ENCODE measurements at regions of chr12 and their contacts with region 1.

Region 1: GRCh38 chr12:12334367-12335040 is 15.5 kb downstream of the MANSC1 start:
- DNase-seq: peak; percentile 77
- H3K4me3 Mint-ChIP-seq: no peak overlapping the region
- H3K27ac Mint-ChIP-seq: no peak overlapping the region
- H3K4me1 Mint-ChIP-seq: peaks cover 25% of the 10 kb centered on the region
- H3K27me3 Mint-ChIP-seq: no peaks in the 10 kb centered on the region

Region 2: DNA sequence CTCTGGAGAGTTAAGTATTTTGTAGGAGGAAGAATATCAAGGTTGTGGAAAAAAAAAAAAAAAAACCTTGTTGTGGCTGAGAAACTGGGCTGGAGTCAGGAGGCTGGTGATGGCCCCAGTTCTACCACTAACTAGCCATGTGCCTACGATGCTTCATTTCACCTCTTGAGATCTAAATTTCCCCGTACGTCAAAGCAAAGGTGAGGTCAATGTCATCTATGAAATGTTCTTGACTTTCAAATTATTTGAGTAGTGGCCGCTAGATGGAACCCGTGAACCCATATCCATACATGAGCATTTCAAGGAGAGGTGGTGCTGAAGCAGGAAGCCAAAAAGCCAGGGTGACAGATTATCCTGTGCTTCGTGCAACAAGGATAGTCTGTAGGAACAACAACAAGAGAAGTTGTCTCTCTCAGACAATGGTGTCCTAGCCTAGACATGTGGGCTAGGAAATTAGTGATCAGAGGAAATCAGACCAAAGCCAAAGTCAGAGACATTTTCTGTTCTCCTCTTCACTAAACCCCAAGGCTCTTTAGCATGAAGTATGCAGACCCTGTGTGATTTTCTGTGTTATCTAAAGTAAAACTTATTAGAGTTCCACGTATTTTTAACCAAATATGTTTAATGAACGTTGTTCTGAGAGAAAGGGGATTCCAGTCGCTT is 780.5 kb before region 1 on chr12:
- CTCF ChIA-PET with region 1: no interaction called
- POLR2A ChIA-PET with region 1: no interaction called
- intact Hi-C with region 1: loop called (anchors 10 kb)
- DNase-seq: peak; percentile 62
- H3K4me3 Mint-ChIP-seq: no peak overlapping the region
- H3K27ac Mint-ChIP-seq: peak overlapping the region; percentile 47
- H3K4me1 Mint-ChIP-seq: peaks cover 23% of the 10 kb centered on the region
- H3K27me3 Mint-ChIP-seq: peaks cover 4% of the 10 kb centered on the region

Region 3: DNA sequence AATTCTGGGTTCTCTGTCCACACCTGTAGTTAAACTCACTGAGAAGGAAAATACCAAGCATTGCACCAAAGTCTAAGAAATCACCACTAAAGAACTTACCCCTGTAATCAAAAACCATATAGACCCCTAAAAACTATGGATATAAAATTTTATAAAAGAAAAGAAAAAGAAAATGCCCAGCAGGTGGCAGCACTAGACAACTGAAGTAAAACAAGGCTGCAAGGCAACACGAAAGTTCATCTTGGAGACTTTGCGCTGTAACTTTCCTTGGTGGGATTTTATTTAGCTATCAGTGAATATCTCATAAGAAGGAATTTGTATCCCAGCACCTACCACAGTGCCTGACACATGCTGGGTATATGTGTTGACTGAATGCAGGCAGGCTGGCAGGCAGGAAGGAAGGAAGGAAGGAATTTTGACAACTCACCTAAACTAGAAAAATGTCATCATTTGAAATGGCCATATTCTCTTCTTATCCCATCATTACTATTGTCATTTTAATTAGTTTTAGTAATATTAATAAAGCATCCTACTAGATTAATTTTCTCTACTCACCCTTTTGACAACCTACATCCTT is 753.2 kb before region 1 on chr12:
- CTCF ChIA-PET with region 1: interaction called, 8 read pairs
- POLR2A ChIA-PET with region 1: no interaction called
- intact Hi-C with region 1: loop called (anchors 2 kb)
- DNase-seq: peak; percentile 63
- H3K4me3 Mint-ChIP-seq: no peak overlapping the region
- H3K27ac Mint-ChIP-seq: no peak overlapping the region
- H3K4me1 Mint-ChIP-seq: peaks cover 23% of the 10 kb centered on the region
- H3K27me3 Mint-ChIP-seq: peaks cover 2% of the 10 kb centered on the region

Region 4: DNA sequence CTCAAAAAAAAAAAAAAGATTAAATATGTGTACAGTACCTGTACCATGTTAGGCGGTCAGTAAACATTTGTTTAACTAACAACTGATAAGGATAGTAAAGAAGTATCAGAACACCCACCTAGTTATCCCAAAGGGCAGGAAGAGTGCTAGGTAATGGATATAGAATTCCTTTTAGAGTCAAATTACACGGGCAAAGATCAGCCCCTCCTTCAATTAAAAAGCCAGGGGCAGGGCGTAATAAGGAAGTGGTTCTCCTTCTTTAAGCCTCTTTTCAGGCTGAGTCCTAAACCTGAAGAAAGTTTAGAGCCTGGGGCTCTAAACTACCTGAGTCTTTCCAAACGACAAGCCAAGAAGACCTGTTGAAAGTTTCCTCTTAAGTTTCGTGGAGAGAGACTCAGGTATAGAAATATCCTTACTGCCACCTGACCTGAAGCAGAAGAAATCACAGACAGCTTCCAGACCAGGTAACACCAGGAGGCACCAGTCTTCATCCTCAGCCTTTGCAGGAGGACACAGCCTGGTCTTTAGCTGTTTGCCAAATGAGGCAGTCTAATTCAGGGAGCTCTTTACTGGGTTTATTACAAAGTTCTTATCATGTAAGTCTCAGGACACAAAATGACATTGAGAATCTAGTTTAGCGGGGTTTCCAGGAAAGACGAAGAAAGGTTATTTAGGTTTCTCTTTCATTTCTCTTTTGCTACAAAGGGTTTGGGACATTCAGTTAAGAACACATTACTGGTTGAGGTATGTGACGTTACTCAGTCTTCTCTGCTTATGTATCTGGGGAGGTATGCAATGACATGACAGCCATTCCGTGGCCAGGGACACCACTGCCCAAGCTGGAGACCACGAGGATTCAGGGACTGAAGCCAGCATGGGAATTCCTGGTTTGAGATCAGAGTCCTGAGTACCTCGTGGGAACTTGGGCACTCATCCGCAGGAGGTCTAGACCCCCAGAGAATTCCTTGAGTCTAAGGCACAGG is 263.5 kb before region 1 on chr12 and contains the start of gene BCL2L14:
- CTCF ChIA-PET with region 1: interaction called, 3 read pairs
- POLR2A ChIA-PET with region 1: no interaction called
- intact Hi-C with region 1: loop called (anchors 5 kb)
- DNase-seq: peak; percentile 50
- H3K4me3 Mint-ChIP-seq: peak within 1 kb of the TSS; percentile 83
- H3K27ac Mint-ChIP-seq: peak within 1 kb of the TSS; percentile 92
- H3K4me1 Mint-ChIP-seq: peaks cover 35% of the 10 kb centered on the region
- H3K27me3 Mint-ChIP-seq: no peaks in the 10 kb centered on the region
- total RNA-seq, gene BCL2L14: 11.5 to 12.7 TPM

Region 5: DNA sequence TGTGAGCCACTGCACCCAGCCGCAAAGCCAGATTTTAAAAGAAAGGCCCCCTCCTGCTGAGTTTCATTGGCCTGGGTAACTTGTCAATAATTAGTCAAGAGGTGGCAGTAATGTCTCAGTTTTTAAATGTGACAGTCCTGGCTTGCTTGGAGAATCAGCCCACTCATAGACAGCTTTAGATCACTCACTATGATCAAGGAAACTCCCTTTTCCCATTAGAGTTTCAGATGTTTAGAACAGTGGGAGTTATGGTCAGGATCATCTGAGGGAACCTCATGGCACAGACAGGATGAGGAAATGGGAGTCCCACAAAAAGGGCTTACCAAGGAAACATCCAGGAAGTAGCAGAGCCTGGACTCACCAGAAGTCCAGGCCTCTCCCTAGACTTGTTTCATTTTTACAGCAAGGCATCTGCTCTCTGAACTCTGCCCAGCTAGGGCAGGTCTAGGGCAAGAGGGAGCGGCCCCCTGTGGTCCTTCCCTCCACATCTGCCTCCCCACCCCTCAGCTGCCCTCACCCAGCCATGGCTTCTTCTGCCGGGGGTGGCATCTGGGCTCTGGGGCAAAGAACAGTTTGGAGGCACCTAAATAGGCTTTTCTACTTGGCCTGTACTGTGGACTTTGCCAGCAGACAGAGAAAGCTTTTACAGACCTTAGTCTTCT is 252.5 kb before region 1 on chr12:
- CTCF ChIA-PET with region 1: interaction called, 13 read pairs
- POLR2A ChIA-PET with region 1: no interaction called
- intact Hi-C with region 1: no loop called
- DNase-seq: no peak
- H3K4me3 Mint-ChIP-seq: no peak overlapping the region
- H3K27ac Mint-ChIP-seq: no peak overlapping the region
- H3K4me1 Mint-ChIP-seq: no peaks in the 10 kb centered on the region
- H3K27me3 Mint-ChIP-seq: no peaks in the 10 kb centered on the region

Region 6: GRCh38 chr12:12266873-12267741 is 67.4 kb before region 1 on chr12 and contains the start of gene LRP6:
- CTCF ChIA-PET with region 1: interaction called, 3 read pairs
- POLR2A ChIA-PET with region 1: no interaction called
- intact Hi-C with region 1: loop called (anchors 2 kb)
- DNase-seq: peak; percentile 81
- H3K4me3 Mint-ChIP-seq: peak within 1 kb of the TSS; percentile 83
- H3K27ac Mint-ChIP-seq: peak within 1 kb of the TSS; percentile 8
- H3K4me1 Mint-ChIP-seq: peaks cover 13% of the 10 kb centered on the region
- H3K27me3 Mint-ChIP-seq: peaks cover 22% of the 10 kb centered on the region
- total RNA-seq, gene LRP6: 2.5 to 2.6 TPM

Region 7: DNA sequence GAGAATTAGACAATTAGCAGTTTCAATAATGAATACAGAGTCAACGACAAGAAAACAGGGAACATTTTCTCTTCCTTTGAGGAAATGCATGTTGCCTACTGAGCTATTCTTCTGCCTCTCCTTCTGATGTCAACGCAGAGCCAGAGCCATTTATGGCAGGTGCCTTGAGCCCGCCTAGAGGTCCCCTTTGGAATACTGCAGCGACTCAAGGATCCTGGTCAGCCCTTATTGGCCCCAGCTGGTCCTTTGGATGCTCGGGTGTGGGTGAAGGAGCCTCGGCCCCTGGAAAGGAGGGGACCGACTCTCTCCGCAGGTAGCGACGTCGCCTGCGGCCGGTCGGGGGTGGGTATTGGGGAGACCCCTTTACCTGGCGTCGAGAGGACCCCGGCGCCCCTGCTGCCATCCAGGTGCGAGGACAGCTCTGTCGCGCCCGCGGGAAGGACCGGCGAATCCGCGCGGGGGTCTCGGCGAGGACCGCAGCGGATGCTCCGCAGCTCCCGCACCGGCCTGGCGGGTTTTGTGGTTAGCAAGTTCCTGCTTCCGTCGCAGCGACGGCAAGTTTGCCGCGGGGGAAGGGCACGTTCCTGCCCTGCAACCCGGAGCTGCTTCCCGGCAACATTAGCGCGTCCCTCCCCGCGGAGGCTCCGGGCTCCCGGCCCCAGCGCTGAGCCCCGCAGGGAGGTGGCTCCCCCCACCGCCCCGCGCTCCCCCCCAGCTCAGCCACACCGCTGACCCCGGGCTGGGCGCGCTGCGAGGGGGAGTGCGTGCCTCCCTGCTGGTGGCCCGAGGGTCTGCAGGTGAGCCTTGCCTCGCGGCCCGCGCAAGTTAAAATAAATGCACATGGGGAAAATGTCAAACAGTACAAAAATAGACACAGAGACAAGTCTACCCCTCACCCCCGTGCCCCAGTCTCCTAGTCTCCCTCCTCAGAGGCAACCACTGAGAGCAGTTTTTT is 15.5 kb after region 1 on chr12 and contains the start of gene MANSC1:
- CTCF ChIA-PET with region 1: interaction called, 20 read pairs
- POLR2A ChIA-PET with region 1: no interaction called
- intact Hi-C with region 1: no loop called
- DNase-seq: peak; percentile 72
- H3K4me3 Mint-ChIP-seq: peak within 1 kb of the TSS; percentile 62
- H3K27ac Mint-ChIP-seq: peak within 1 kb of the TSS; percentile 16
- H3K4me1 Mint-ChIP-seq: peaks cover 17% of the 10 kb centered on the region
- H3K27me3 Mint-ChIP-seq: no peaks in the 10 kb centered on the region
- total RNA-seq, gene MANSC1: 1.9 to 2.2 TPM

Region 8: DNA sequence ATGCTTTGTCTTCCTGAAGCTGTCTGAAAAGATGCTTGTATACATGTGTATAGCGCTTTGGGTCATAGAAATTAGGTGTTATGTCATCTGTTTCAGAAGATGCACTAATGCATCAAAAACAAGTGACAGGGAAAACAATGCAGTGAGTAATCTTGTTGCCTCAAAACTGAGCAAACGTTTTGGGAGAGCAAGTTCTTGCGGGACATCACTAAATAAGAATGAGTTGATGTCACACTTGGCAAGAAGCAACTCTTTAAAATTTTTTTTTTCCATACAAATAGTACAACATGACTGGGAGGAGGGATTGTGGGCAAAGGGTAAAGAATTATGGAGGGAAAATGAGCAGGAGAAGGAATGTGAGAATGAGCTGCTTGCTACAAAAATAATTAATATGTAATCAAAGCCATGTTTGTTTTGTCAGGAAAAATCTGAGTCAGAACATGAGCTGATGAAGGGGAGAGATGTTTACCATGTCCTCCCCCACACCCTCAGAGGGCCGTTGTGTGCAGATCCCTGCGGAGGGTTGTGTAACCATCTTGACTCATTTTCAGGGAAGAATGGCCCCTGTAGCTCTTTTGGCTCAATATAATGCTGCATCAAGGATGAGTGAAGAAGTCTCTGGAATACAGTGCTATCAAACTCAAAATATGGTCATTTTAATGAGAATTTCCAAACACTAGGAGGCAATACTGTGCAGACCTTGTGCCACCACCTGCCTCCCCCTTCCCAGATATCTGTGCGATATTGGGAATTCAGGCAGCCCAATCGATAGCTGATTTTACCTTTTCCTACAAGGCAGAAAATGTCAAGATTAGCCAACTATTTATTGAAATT is 63.7 kb after region 1 on chr12:
- CTCF ChIA-PET with region 1: no interaction called
- POLR2A ChIA-PET with region 1: no interaction called
- intact Hi-C with region 1: no loop called
- DNase-seq: no peak
- H3K4me3 Mint-ChIP-seq: no peak overlapping the region
- H3K27ac Mint-ChIP-seq: no peak overlapping the region
- H3K4me1 Mint-ChIP-seq: peaks cover 61% of the 10 kb centered on the region
- H3K27me3 Mint-ChIP-seq: no peaks in the 10 kb centered on the region